ENCODE measurements at regions of chr13 and their contacts with region 1.

Region 1: GRCh38 chr13:43804461-43805070 is 17.8 kb upstream of the ENOX1 start:
- DNase-seq: no peak
- ATAC-seq: peak in 2 of 4 donors; percentile 54 to 64
- H3K4me3 ChIP-seq: no peak overlapping the region
- H3K27ac ChIP-seq: peak overlapping the region in 1 of 12 donors; percentile 26
- H3K4me1 ChIP-seq: peaks cover 0 to 8% (median 0%) of the 10 kb centered on the region in 12 donors
- H3K27me3 ChIP-seq: no peaks in the 10 kb centered on the region
- CTCF ChIP-seq: peak; percentile 44 to 75 (median 62)
- POLR2A ChIP-seq: no peak

Region 2: GRCh38 chr13:42594970-42595571 is 1209.5 kb before region 1 on chr13:
- intact Hi-C with region 1: loop called in 7 of 10 experiments (anchors 5 to 10 kb)
- DNase-seq: peak in 3 of 5 donors; percentile 23 to 37 (median 30)
- ATAC-seq: peak in 2 of 4 donors; percentile 50 to 63
- H3K4me3 ChIP-seq: no peak overlapping the region
- H3K27ac ChIP-seq: no peak overlapping the region
- H3K4me1 ChIP-seq: no peaks in the 10 kb centered on the region
- H3K27me3 ChIP-seq: peaks cover 0 to 27% (median 2%) of the 10 kb centered on the region in 9 donors
- CTCF ChIP-seq: peak; percentile 78 to 89 (median 85)
- POLR2A ChIP-seq: no peak

Region 3: DNA sequence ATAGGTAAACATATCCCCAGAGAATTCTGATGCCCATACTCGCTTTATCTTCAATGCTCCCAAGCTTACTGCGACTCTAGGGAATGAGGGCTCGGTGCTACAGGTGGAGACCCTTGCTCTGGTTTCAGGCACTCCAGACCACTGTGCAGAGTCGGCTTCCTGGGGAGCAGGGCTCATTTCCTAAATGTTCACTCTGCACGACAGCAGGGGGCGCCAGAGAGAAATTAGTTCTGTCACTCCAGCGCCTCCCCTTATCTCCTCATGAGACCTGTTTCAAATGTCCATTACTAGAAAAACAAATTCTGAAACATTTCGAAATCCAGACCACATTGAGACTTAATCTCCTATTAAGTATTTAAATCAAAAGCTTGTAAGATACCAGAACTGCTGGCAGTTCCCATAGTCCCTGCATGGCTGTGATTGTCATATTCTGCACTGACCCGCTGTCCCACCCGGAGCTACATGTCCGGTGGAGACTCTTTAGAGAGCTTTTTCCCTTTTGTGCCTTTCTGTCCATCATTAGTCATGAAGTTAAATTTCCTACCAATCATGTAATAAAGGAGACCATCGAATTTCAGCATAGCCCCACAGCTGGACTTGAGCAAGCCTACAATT is 834.9 kb before region 1 on chr13:
- intact Hi-C with region 1: loop called in 8 of 10 experiments (anchors 2 to 10 kb)
- DNase-seq: peak; percentile 70 to 86 (median 83)
- ATAC-seq: peak; percentile 71 to 92 (median 88)
- H3K4me3 ChIP-seq: no peak overlapping the region
- H3K27ac ChIP-seq: no peak overlapping the region
- H3K4me1 ChIP-seq: peaks cover 0 to 34% (median 10%) of the 10 kb centered on the region in 12 donors
- H3K27me3 ChIP-seq: no peaks in the 10 kb centered on the region
- CTCF ChIP-seq: peak; percentile 70 to 88 (median 82)
- POLR2A ChIP-seq: no peak

Region 4: DNA sequence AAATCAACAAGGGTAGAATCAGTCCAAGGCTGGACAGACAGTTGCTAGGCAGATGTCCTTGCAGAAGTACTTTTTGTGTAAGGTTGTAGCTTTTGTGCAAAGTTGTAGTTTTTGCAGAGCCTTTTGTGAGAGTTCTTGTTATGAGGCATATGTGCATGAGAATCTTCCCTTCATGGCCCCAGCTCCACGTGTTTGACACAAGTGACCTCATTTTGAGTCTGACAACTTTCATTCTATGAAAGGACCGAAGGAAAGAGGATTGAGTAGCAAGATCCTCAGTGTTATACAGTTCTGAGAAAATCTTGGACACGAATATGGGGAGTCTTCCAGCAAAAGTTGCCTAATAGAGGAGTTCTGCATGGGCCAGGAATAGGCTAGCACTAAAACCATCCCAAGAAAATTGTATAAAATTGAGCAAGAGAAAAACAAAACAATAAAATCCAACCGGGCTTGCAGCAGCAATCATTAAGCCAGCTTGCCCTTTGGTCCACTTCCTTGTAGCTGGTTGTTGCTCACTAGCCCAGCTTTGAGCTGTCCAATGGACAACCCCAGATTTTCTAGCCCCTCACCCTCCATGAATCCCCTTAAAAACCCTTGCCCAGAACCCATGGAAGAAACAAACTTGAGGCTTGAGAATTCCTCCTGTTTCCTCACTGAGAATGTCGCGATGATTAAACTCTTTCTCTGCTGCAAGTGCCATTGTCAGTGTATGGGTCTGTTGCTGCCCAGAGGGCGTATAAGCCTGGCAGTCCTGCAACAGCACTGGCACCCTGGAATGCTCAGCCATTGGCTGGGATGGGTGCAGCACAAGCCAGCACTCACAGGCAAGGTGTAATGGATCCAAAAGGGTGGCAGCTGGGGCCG is 819.0 kb before region 1 on chr13:
- intact Hi-C with region 1: loop called in 1 of 10 experiments (anchors 10 kb)
- DNase-seq: peak in 1 of 5 donors; percentile 37
- ATAC-seq: peak; percentile 63 to 82 (median 68)
- H3K4me3 ChIP-seq: no peak overlapping the region
- H3K27ac ChIP-seq: peak overlapping the region in 3 of 12 donors; percentile 7 to 33 (median 10)
- H3K4me1 ChIP-seq: peaks cover 0 to 54% (median 11%) of the 10 kb centered on the region in 12 donors
- H3K27me3 ChIP-seq: no peaks in the 10 kb centered on the region
- CTCF ChIP-seq: no peak
- POLR2A ChIP-seq: no peak

Region 5: DNA sequence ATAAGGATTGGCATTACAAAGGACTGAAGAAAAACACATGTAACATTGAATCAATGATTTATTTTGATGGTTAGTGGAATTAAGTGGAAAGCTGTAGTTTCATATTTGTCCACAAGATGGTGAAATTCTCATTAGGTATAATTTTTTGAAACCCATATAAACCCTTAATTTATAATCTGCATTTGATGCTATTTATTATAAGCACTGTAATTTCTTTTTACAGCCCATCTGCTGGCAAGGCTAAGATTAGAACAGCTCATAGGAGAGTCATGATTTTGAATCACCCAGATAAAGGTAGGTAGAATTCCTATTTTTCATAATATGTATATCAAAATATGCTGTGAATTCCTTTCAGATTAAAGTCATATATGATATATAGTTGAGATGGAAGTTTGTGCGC is 719.0 kb before region 1 on chr13:
- intact Hi-C with region 1: loop called in 9 of 10 experiments (anchors 2 to 10 kb)
- DNase-seq: no peak
- ATAC-seq: no peak
- H3K4me3 ChIP-seq: no peak overlapping the region
- H3K27ac ChIP-seq: no peak overlapping the region
- H3K4me1 ChIP-seq: peaks cover 0 to 22% (median 0%) of the 10 kb centered on the region in 12 donors
- H3K27me3 ChIP-seq: no peaks in the 10 kb centered on the region
- CTCF ChIP-seq: peak; percentile 59 to 75 (median 68)
- POLR2A ChIP-seq: no peak

Region 6: DNA sequence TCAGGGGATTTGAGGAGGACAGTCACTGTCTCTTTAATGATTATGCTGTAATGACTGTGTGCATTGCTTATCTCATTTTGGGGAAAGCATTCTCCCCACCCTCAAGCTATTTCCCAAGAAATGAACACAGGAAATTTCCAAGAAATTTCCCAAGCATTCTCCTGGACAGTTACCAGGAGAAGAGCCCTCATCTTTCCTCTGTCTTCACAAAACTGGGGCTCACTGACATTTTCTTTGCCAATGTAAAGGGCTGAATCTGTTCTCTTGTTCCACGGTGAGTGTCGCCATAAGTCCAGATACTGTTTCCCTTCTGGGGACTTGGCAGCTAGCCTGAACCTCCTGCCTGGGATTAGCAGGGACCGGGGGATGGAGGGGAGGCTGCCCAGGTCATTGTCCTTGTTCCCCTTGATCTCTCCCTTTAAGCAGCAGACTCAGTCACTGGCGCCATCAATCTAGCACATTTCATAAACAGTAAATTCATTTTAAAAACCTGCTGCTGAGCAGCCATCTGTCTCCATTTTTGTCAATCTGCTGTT is 608.4 kb before region 1 on chr13:
- intact Hi-C with region 1: loop called in 6 of 10 experiments (anchors 5 to 10 kb)
- DNase-seq: peak in 4 of 5 donors; percentile 60 to 73 (median 60)
- ATAC-seq: peak; percentile 44 to 85 (median 80)
- H3K4me3 ChIP-seq: peak overlapping the region in 1 of 12 donors; percentile 1
- H3K27ac ChIP-seq: no peak overlapping the region
- H3K4me1 ChIP-seq: peaks cover 0 to 14% (median 0%) of the 10 kb centered on the region in 12 donors
- H3K27me3 ChIP-seq: peaks cover 0 to 4% (median 0%) of the 10 kb centered on the region in 9 donors
- CTCF ChIP-seq: peak in 7 of 12 donors; percentile 9 to 54 (median 34)
- POLR2A ChIP-seq: no peak

Region 7: DNA sequence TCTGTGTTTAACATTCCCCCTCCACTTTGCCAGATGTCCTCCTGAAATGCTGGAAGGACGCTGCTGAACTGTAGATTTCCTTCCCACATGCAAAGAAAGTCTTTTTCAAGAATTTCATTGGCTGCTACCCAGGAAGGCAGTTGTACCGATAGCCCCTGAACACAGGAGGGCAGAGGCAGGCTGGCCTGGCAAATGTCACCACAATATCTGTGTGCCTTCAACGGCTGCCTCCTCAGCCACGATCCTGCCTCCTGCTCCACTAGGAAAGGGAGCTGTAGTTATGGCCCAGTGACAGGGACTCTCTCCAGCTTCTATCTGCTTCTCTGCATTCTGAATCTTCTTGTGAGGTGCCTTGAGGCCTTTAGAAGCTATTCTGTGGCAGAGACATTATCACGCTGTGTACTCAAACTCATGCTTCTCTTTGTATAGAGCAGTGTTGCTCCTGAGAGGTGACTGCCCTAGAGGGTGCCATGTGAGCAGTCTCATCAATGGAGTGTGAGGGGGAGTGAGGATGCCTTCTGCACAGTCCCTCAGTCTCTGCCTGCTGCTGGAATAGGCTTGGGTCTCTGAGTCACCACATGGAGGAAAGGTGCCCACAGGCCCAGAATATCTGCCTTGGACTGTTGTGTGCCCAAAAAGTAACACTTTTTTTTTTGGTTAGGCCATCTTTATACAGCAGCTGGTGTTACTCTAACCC is 501.4 kb before region 1 on chr13:
- intact Hi-C with region 1: loop called in 6 of 10 experiments (anchors 2 to 10 kb)
- DNase-seq: peak; percentile 55 to 78 (median 68)
- ATAC-seq: peak; percentile 71 to 91 (median 90)
- H3K4me3 ChIP-seq: no peak overlapping the region
- H3K27ac ChIP-seq: peak overlapping the region in 7 of 12 donors; percentile 16 to 54 (median 35)
- H3K4me1 ChIP-seq: peaks cover 0 to 25% (median 9%) of the 10 kb centered on the region in 12 donors
- H3K27me3 ChIP-seq: no peaks in the 10 kb centered on the region
- CTCF ChIP-seq: peak; percentile 36 to 70 (median 54)
- POLR2A ChIP-seq: no peak

Region 8: DNA sequence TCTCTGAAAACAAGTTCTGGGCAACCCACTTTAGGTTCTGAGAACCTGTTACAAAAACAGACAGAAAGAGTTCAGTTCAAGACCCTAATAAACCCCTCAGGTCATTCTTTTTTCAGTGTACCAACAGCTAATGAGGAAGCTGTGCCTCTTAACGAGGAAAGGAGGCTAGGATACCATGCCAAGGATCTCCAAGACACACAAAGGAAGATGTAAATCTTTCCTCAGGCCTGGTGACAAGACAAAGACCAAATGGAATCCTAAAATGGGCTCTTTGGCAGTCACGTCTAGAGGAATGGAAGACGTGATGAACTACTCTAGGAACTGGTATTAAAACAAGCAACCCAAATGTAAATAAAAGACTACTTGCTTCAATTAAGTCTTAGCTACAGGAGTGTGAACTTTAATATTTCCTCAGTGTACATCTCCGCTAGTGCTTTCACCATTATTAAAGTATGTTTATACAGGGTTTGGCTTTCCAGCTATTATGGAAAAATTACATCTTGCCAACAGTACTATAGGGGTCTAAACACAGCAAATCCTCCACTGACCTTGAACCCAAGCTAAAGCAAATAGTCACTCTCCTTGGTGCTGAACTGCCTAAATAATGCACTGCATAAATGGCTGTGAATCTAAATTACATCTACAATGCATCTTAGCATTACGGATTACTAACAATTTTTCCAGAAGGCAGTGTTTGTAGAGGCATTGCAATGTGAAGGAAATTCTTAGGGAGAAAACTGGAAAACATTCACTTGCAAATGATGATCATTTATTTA is 60.1 kb before region 1 on chr13:
- intact Hi-C with region 1: no loop called
- DNase-seq: no peak
- ATAC-seq: no peak
- H3K4me3 ChIP-seq: no peak overlapping the region
- H3K27ac ChIP-seq: no peak overlapping the region
- H3K4me1 ChIP-seq: no peaks in the 10 kb centered on the region
- H3K27me3 ChIP-seq: no peaks in the 10 kb centered on the region
- CTCF ChIP-seq: no peak
- POLR2A ChIP-seq: no peak

Region 9: GRCh38 chr13:44169018-44169911 is 364.7 kb after region 1 on chr13:
- intact Hi-C with region 1: no loop called
- DNase-seq: no peak
- ATAC-seq: no peak
- H3K4me3 ChIP-seq: no peak overlapping the region
- H3K27ac ChIP-seq: no peak overlapping the region
- H3K4me1 ChIP-seq: peaks cover 0 to 2% (median 0%) of the 10 kb centered on the region in 12 donors
- H3K27me3 ChIP-seq: no peaks in the 10 kb centered on the region
- CTCF ChIP-seq: no peak
- POLR2A ChIP-seq: no peak

Measured in heart left ventricle (tissue), 16 donors.